Activated CD4-positive, alpha-beta memory T cell treated with anti-CD3 and anti-CD28 coated beads, Interleukin-2, amount 10 ng/mL, durations not matched to agents 7 days and 5 days (primary cell): ENCODE measurements at regions of chr10 and their contacts with region 1.

Region 1: DNA sequence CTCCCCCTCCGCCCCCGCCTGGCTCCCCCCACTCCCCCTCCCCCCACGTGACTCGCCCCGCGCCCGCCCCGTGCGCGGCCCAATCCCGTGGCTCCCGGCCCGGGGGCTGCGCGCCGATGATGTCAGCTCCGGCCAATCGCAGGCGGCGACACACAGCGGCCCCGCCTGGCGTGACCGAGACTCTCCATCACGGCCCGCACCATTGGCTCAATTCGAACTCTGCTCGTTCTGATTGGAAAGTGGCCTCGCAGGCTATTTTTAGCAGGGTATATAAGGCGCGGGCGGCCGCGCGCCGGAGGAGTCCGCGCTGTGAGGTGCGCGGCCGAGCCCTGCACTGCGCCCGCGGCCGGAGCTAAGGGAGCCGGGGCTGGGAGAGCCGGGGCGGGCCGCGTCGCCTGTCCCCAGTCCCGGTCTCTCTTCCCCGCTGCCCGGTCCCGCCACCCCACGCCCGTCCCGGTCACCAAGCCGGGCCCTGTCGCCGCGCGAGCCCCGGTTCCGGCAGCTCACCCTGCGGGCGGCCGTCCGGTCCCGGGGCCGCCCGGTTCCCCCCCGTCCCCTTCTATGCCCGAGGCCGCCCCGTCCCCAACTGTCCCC is 345 bp upstream of the KLF6 start:
- DNase-seq: peak; percentile 100
- H3K4me3 Mint-ChIP-seq: peak overlapping the region; percentile 97
- H3K27ac Mint-ChIP-seq: peak overlapping the region; percentile 98
- H3K4me1 Mint-ChIP-seq: peaks cover 25% of the 10 kb centered on the region
- H3K27me3 Mint-ChIP-seq: peaks cover 3% of the 10 kb centered on the region

Region 2: GRCh38 chr10:3467052-3467951 is 318.1 kb before region 1 on chr10:
- CTCF ChIA-PET with region 1: no interaction called
- POLR2A ChIA-PET with region 1: interaction called, 26 read pairs
- DNase-seq: peak; percentile 49
- H3K4me3 Mint-ChIP-seq: peak overlapping the region; percentile 79
- H3K27ac Mint-ChIP-seq: peak overlapping the region; percentile 90
- H3K4me1 Mint-ChIP-seq: peaks cover 60% of the 10 kb centered on the region
- H3K27me3 Mint-ChIP-seq: peaks cover 6% of the 10 kb centered on the region

Region 3: DNA sequence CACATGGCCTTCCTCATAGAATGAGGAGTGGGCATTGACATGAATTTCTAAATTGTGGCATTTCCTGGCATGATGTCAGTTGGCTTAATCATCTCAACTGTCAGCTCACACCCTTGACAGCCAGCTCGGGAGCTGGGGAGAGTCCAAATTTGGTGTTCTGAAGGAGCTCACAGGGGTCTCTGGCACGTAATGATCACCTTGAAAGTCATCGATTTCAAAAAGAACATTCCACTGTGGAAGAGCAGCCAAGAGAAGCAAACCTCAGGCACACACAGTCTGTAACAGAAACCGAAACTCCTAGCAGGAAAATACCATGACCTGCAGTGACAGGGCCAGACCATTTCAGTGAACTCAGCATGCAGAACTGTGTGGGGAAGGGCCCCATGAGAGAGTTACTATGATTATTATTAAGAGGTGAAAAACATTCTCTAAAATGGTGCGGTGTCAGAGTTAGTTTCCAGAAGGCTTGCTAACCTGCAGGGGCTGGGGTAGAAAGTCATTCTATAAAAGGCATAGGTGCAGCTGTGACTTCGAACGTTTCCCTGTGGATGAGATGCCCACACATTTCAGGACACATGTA is 26.0 kb after region 1 on chr10:
- CTCF ChIA-PET with region 1: interaction called, 25 read pairs
- POLR2A ChIA-PET with region 1: interaction called, 1,053 read pairs
- DNase-seq: peak; percentile 71
- H3K4me3 Mint-ChIP-seq: peak overlapping the region; percentile 68
- H3K27ac Mint-ChIP-seq: no peak overlapping the region
- H3K4me1 Mint-ChIP-seq: peaks cover 84% of the 10 kb centered on the region
- H3K27me3 Mint-ChIP-seq: no peaks in the 10 kb centered on the region

Region 4: GRCh38 chr10:3887885-3888476 is 102.6 kb after region 1 on chr10:
- CTCF ChIA-PET with region 1: no interaction called
- POLR2A ChIA-PET with region 1: interaction called, 69 read pairs
- DNase-seq: peak; percentile 72
- H3K4me3 Mint-ChIP-seq: peak overlapping the region; percentile 36
- H3K27ac Mint-ChIP-seq: peak overlapping the region; percentile 84
- H3K4me1 Mint-ChIP-seq: peaks cover 57% of the 10 kb centered on the region
- H3K27me3 Mint-ChIP-seq: no peaks in the 10 kb centered on the region

Region 5: GRCh38 chr10:3961082-3961481 is 175.7 kb after region 1 on chr10:
- CTCF ChIA-PET with region 1: no interaction called
- POLR2A ChIA-PET with region 1: interaction called, 68 read pairs
- DNase-seq: peak; percentile 76
- H3K4me3 Mint-ChIP-seq: peak overlapping the region; percentile 18
- H3K27ac Mint-ChIP-seq: peak overlapping the region; percentile 80
- H3K4me1 Mint-ChIP-seq: peaks cover 49% of the 10 kb centered on the region
- H3K27me3 Mint-ChIP-seq: no peaks in the 10 kb centered on the region

Region 6: GRCh38 chr10:4073912-4074311 is 288.6 kb after region 1 on chr10:
- CTCF ChIA-PET with region 1: no interaction called
- POLR2A ChIA-PET with region 1: interaction called, 40 read pairs
- DNase-seq: no peak
- H3K4me3 Mint-ChIP-seq: no peak overlapping the region
- H3K27ac Mint-ChIP-seq: no peak overlapping the region
- H3K4me1 Mint-ChIP-seq: peaks cover 33% of the 10 kb centered on the region
- H3K27me3 Mint-ChIP-seq: no peaks in the 10 kb centered on the region